ENCODE measurements at regions of chr16 and their contacts with region 1.

Region 1: DNA sequence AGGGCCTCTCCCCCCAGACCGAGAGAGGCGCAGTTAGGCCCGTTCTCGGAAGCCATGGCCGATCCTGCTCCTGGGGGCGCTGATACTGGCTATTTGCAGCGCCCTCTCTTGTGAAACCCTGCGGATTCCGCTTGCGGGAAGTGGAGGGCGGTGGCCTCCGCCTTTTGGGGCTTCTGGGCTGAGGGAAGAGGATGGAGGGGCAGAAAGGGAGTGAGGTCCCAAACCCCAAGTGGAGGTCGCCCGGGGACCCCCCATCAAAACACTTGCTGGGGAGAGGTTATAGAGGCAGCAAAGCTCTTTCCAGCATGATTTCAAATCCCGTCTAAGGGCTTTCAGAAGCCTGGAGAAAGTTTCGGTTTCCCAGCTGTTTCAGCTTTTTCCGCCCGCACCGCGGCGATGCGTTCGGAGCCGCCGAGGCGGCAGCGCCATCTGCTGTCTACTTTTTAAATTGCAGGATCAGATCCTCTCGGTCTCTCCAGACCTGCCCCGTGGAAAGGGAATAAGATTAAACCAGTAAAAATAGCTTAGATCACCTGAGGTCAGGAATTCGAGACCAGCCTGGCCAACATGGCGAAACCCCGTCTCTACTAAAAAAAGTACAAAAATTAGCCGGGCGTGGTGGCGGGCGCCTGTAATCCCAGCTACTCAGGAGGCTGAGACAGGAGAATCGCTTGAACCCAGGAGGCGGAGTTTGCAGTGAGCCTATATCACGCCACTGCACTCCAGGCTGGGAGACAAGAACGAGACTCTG is 15.8 kb downstream of the SNX20 start:
- DNase-seq: peak; percentile 77
- H3K4me3 ChIP-seq: peak overlapping the region; percentile 42 to 76 (median 72)
- H3K27ac ChIP-seq: no peak overlapping the region
- H3K4me1 ChIP-seq: peaks cover 3% of the 10 kb centered on the region
- H3K27me3 ChIP-seq: no peaks in the 10 kb centered on the region
- CTCF ChIP-seq: peak; percentile 77 to 80
- POLR2A ChIP-seq: no peak

Region 2: DNA sequence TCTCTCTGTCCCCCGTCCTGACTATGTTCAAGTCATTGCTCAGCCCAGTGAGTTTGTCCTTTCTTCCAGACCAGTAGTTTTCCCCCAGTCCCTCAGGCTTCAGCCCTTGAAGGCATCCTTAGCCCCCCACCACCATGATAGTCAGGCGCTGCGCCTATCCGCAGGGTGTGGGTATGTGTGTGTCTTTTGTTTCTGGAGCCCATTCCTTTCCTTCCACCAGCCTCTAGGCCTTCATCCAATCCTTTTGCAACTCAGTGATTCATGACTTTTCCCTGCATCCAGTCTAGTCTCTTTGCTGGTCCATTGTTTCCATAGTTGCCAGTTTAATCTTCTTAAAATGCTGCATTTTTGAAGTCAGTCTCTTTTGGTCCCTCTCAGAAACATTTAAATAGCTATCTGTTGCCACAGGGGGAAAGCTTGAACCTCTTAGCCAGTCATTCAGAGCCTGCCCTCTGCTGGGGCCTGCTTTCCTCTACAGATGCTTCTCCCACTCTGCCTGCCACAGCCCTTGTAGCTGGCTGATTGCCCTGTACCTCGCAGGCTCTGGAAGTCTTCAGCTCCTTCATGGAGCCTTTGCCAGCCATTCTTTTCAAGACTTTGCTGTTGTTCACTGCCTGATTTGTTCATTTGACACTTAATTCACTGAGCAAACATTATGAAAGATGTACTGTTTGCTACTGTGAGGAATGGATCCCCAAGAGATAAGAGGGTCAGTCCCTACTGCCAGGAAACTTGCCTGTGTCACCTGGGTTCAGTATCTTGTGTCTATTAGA is 454.9 kb before region 1 on chr16:
- CTCF ChIA-PET with region 1: interaction called, 27 read pairs
- POLR2A ChIA-PET with region 1: no interaction called
- dilution Hi-C with region 1: no loop called
- intact Hi-C with region 1: loop called (anchors 1 kb)
- DNase-seq: peak; percentile 86
- H3K4me3 ChIP-seq: no peak overlapping the region
- H3K27ac ChIP-seq: no peak overlapping the region
- H3K4me1 ChIP-seq: peaks cover 22% of the 10 kb centered on the region
- H3K27me3 ChIP-seq: no peaks in the 10 kb centered on the region
- CTCF ChIP-seq: peak; percentile 71 to 80
- POLR2A ChIP-seq: no peak

Region 3: DNA sequence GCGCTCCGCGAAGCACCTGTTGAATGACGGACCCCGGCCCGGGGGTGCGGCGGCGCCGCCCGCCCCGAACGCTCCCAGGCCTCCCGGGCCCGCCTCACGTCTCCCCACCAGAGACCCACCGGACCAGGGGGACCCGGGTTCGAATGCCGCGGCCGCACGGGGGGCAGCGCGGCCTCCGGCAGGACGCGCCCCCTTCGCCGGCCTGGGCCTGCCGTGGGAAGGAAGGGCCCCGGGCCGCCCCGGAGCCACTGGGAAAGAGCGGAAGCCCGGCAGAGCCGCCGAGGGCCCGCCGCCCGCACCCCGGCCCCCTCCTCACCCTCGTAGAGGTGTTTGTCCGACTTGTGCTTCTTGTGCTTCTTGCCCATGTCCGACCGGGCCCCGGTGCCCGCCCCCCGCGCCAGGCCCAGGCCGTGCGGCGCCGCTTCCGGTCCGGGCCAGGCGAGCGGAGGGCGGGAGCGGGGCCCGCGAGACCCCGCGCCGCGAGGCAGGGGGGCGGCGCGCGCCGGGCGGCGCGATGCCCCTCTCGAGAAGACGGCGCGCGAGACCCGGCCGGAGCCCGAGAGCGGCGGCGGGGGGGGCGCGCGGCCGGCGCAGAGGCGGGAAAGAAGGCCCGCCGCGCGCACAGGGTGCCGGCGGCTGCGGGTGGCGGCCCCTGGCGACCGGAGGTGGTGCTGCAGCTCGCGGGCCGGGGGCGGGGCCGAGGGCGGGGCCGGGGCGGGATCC is 296.7 kb before region 1 on chr16 and contains the start of gene BRD7:
- CTCF ChIA-PET with region 1: interaction called, 53 read pairs
- POLR2A ChIA-PET with region 1: no interaction called
- dilution Hi-C with region 1: no loop called
- intact Hi-C with region 1: loop called (anchors 2 kb)
- DNase-seq: peak; percentile 39
- H3K4me3 ChIP-seq: peak within 1 kb of the TSS; percentile 46 to 96 (median 87)
- H3K27ac ChIP-seq: peak within 1 kb of the TSS; percentile 63
- H3K4me1 ChIP-seq: peaks cover 8% of the 10 kb centered on the region
- H3K27me3 ChIP-seq: no peaks in the 10 kb centered on the region
- CTCF ChIP-seq: peak in 1 of 2 donors; percentile 48
- POLR2A ChIP-seq: no peak
- total RNA-seq, gene BRD7: 69.1 and 78.0 TPM in 2 replicates

Region 4: GRCh38 chr16:50593410-50594150 is 71.7 kb before region 1 on chr16:
- CTCF ChIA-PET with region 1: interaction called, 105 read pairs
- POLR2A ChIA-PET with region 1: no interaction called
- dilution Hi-C with region 1: no loop called
- intact Hi-C with region 1: loop called (anchors 1 kb)
- DNase-seq: peak; percentile 24
- H3K4me3 ChIP-seq: no peak overlapping the region
- H3K27ac ChIP-seq: no peak overlapping the region
- H3K4me1 ChIP-seq: no peaks in the 10 kb centered on the region
- H3K27me3 ChIP-seq: no peaks in the 10 kb centered on the region
- CTCF ChIP-seq: peak; percentile 16 to 37
- POLR2A ChIP-seq: no peak

Region 5: GRCh38 chr16:50677351-50677750 is 12.0 kb after region 1 on chr16:
- CTCF ChIA-PET with region 1: interaction called, 23 read pairs
- POLR2A ChIA-PET with region 1: no interaction called
- dilution Hi-C with region 1: no loop called
- intact Hi-C with region 1: no loop called
- DNase-seq: no peak
- H3K4me3 ChIP-seq: no peak overlapping the region
- H3K27ac ChIP-seq: no peak overlapping the region
- H3K4me1 ChIP-seq: no peaks in the 10 kb centered on the region
- H3K27me3 ChIP-seq: no peaks in the 10 kb centered on the region
- CTCF ChIP-seq: peak in 1 of 2 donors; percentile 28
- POLR2A ChIP-seq: no peak

Region 6: DNA sequence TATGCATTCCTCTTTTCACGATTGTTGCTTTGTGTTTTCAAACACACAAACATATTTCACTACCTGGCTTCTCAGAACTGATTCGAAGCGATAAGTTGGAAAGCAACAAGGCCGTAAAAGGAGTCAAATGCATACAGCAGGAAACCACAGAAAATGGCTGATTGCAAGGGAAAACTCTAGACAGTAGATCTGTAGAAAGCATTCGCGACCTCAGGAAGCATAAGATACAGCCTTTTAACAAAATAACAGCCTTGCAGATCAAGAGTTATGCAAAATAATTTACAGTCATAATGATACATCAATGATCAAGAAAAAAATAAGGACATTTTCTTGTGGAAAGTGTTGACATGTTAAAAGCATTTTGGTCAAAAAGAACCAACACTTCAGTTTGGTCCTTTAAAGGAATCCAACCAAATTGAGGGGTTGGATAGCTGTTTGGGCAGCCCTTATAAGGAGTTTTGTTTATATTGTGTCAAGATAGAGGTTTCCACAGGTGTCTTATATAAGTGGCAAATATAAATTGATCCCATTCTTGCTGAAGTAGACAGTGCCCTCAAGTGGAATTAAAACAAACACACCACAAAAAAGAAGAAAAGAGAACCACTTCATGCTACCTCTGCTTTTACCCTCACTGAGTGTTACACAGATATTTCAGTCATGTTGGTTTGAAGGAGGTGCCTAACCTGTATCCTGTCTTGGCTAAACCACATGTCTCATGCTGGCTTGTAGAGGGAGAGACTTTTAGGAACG is 82.1 kb after region 1 on chr16:
- CTCF ChIA-PET with region 1: interaction called, 11 read pairs
- POLR2A ChIA-PET with region 1: no interaction called
- dilution Hi-C with region 1: no loop called
- intact Hi-C with region 1: loop called (anchors 1 kb)
- DNase-seq: peak; percentile 33
- H3K4me3 ChIP-seq: no peak overlapping the region
- H3K27ac ChIP-seq: no peak overlapping the region
- H3K4me1 ChIP-seq: peaks cover 6% of the 10 kb centered on the region
- H3K27me3 ChIP-seq: no peaks in the 10 kb centered on the region
- CTCF ChIP-seq: no peak
- POLR2A ChIP-seq: no peak